GM12878 (cell line): ENCODE measurements at regions of chr1 and their contacts with region 1.

Region 1: GRCh38 chr1:235513495-235514366 is 9.5 kb upstream of the B3GALNT2 start:
- DNase-seq: no peak
- ATAC-seq: peak; percentile 70
- H3K4me3 ChIP-seq: no peak overlapping the region
- H3K27ac ChIP-seq: no peak overlapping the region
- H3K4me1 ChIP-seq: no peaks in the 10 kb centered on the region; the same call in 1 of the 2 replicates
- H3K27me3 ChIP-seq: no peaks in the 10 kb centered on the region
- CTCF ChIP-seq: peak; percentile 79 to 93 (median 82)
- EP300 ChIP-seq: no peak
- POLR2A ChIP-seq: no peak
- RAD21 ChIP-seq: peak; percentile 94

Region 2: GRCh38 chr1:235527196-235527814 is 13.6 kb after region 1 on chr1:
- CTCF ChIA-PET with region 1: interaction called, 10 read pairs
- POLR2A ChIA-PET with region 1: no interaction called
- RAD21 ChIA-PET with region 1: no interaction called
- SMC1A ChIA-PET with region 1: interaction called, 3 read pairs
- in situ Hi-C with region 1: no loop called
- intact Hi-C with region 1: no loop called
- DNase-seq: no peak
- ATAC-seq: no peak
- H3K4me3 ChIP-seq: no peak overlapping the region
- H3K27ac ChIP-seq: no peak overlapping the region
- H3K4me1 ChIP-seq: no peaks in the 10 kb centered on the region
- H3K27me3 ChIP-seq: 0 out of 4 replicates have a peak, but pooled peaks cover 0 to 3% of the 10 kb centered on the region in 2 experiments
- CTCF ChIP-seq: no peak
- EP300 ChIP-seq: no peak
- POLR2A ChIP-seq: no peak
- RAD21 ChIP-seq: no peak

Region 3: DNA sequence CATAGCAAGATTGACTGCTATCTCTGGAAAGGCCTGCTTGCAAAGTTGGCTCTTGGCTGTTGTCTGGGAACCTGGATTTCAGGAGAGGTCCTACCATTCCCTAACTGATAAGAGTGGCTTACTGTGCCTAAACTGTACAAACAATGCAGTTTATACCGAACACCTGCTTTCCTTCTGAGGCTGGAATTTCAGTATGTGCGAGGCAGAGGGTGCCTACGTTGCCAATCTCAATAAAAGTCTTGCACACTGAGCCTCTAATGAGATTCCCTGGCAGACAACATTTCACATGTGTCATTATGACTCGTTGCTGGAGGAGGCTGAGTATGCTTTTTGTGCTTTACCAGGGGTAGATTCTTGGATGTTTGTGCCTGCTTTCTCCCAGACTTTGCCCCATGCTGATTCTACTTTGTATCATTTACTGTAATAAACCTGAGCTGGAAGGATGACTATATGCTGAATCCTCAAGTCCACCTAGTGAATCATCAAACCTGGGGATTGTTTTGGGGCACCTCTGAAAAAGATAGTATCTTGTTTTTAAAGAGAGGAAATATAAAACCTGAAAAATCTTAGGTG is 194.7 kb after region 1 on chr1:
- CTCF ChIA-PET with region 1: no interaction called
- POLR2A ChIA-PET with region 1: no interaction called
- RAD21 ChIA-PET with region 1: no interaction called
- SMC1A ChIA-PET with region 1: no interaction called
- in situ Hi-C with region 1: no loop called
- intact Hi-C with region 1: no loop called
- DNase-seq: no peak
- ATAC-seq: no peak
- H3K4me3 ChIP-seq: no peak overlapping the region
- H3K27ac ChIP-seq: no peak overlapping the region
- H3K4me1 ChIP-seq: no peaks in the 10 kb centered on the region
- H3K27me3 ChIP-seq: no peaks in the 10 kb centered on the region
- CTCF ChIP-seq: no peak
- EP300 ChIP-seq: no peak
- POLR2A ChIP-seq: no peak
- RAD21 ChIP-seq: no peak

Region 4: GRCh38 chr1:235776396-235776795 is 262.7 kb after region 1 on chr1:
- CTCF ChIA-PET with region 1: interaction called, 29 read pairs
- POLR2A ChIA-PET with region 1: no interaction called
- RAD21 ChIA-PET with region 1: interaction called, 3 read pairs
- SMC1A ChIA-PET with region 1: interaction called, 7 read pairs
- in situ Hi-C with region 1: loop called (anchors 5 kb)
- intact Hi-C with region 1: no loop called
- DNase-seq: no peak
- ATAC-seq: no peak
- H3K4me3 ChIP-seq: no peak overlapping the region
- H3K27ac ChIP-seq: no peak overlapping the region
- H3K4me1 ChIP-seq: no peaks in the 10 kb centered on the region
- H3K27me3 ChIP-seq: no peaks in the 10 kb centered on the region
- CTCF ChIP-seq: no peak
- EP300 ChIP-seq: no peak
- POLR2A ChIP-seq: no peak
- RAD21 ChIP-seq: no peak